Colonic mucosa (tissue), 4 donors: ENCODE measurements at regions of chr9 and their contacts with region 1.

Region 1: DNA sequence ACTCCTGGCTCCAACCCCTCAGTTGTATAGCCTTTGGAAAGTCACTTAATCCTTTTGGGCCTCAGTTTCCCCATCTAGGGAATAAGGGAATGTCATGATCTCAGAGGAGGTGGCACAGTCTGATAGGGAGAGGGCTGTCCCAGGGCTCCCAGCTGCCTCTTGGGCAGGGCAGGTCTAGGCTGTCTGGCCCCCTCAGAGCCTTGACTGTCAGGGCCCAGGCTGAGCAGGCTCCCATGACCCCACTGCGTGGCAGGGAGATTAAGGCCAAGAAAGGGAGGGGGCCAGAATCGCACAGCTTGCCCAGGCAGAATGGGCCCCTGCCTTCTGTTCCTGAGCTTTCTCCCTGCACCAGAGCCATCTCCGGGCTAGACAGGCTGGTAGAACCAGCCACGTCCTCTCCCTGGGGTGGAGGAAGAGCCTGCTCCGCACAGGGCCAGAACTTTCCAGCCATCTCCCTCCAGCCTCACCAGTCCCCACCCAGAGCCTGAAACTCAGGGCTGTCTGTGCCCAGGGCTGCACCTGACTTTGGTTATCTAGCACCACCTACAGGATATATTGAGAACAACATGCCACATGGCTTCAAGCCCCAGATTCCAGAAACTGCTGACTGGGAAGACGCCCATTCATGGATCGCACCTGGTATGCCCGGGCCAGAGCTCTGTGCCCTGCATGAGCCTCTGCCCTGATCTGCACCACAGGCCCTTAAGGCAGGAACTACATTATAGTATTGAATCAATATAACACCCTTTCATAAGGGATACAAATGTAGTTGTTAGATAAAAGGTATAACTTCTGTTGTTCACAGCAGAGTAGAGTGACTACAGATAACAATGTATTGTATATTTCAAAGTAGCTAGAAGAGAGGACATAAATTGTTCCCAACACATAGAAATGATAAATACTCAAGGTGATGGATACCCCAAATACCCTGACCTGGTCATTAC is 32.0 kb downstream of the NAIF1 start:
- DNase-seq: peak; percentile 75
- H3K4me3 ChIP-seq: no peak overlapping the region
- H3K27ac ChIP-seq: no peak overlapping the region
- H3K4me1 ChIP-seq: no peaks in the 10 kb centered on the region
- H3K27me3 ChIP-seq: no peaks in the 10 kb centered on the region
- CTCF ChIP-seq: peak; percentile 92

Region 2: DNA sequence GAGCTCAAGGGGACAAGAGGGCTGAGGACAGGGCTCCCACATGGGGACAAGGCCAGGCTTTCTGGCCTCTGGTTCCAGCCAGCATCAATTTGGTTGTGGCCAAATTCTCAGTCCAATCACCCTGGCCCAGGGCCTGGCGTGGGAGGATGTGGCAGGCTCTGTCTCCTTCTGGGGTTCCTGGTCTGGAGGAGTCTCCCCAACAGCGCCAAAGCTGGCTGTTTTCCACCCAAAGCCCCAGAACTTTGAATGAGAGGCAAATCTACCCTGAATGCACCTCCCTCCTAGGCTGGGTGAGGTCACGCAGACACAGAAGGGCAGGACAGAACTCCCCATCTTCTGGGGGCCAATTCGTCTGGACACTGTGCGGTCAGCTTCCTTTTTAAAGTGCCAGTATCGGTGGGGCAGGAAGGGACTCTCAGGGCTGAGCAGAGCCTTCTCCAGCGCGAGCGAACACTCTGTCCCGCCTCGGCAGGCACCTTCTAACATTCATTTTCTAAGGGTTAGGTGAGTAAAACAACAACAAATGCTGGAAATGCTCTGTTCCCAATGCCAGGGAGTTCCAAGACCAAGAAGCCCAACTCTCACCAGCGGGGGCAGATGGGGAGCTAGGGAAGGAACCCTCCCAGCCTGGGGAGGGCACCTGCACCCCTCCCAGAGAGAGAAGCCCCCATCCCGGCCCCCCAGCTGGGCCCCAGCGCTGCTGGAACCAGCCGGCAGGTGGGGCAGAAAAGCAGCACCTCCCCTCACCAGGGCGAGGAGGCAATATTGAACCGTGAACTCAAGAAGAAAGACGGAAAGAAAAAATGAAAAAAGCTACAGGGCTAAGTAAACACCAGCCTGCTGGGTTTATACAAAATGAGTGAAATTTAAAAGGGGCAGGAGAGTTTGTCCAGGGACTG is 93.8 kb before region 1 on chr9:
- intact Hi-C with region 1: loop called (anchors 2 kb)
- DNase-seq: no peak
- H3K4me3 ChIP-seq: no peak overlapping the region
- H3K27ac ChIP-seq: no peak overlapping the region
- H3K4me1 ChIP-seq: peaks cover 5% of the 10 kb centered on the region
- H3K27me3 ChIP-seq: no peaks in the 10 kb centered on the region
- CTCF ChIP-seq: no peak